OCI-LY7 (cell line): ENCODE measurements at regions of chrX and their contacts with region 1.

Region 1: GRCh38 chrX:47650164-47651042 is at the start of gene ELK1:
- DNase-seq: peak; percentile 96
- H3K4me3 ChIP-seq: peak within 1 kb of the TSS; percentile 96
- H3K27ac ChIP-seq: peak within 1 kb of the TSS; percentile 52
- H3K4me1 ChIP-seq: peaks cover 21% of the 10 kb centered on the region
- CTCF ChIP-seq: no peak
- total RNA-seq, gene ELK1: 23.0 and 23.3 TPM in 2 replicates

Region 2: GRCh38 chrX:47217642-47218279 is 432.6 kb before region 1 on chrX:
- CTCF ChIA-PET with region 1: no interaction called
- POLR2A ChIA-PET with region 1: no interaction called
- intact Hi-C with region 1: loop called (anchors 2 kb)
- DNase-seq: peak; percentile 96
- H3K4me3 ChIP-seq: peak overlapping the region; percentile 98
- H3K27ac ChIP-seq: peak overlapping the region; percentile 80
- H3K4me1 ChIP-seq: peaks cover 26% of the 10 kb centered on the region
- CTCF ChIP-seq: no peak

Region 3: GRCh38 chrX:47560831-47561652 is 89.4 kb before region 1 on chrX and contains the start of gene ARAF:
- CTCF ChIA-PET with region 1: no interaction called
- POLR2A ChIA-PET with region 1: no interaction called
- intact Hi-C with region 1: loop called (anchors 5 kb)
- DNase-seq: peak; percentile 98
- H3K4me3 ChIP-seq: peak within 1 kb of the TSS; percentile 86
- H3K27ac ChIP-seq: peak within 1 kb of the TSS; percentile 70
- H3K4me1 ChIP-seq: peaks cover 31% of the 10 kb centered on the region
- CTCF ChIP-seq: no peak
- total RNA-seq, gene ARAF: 13.2 and 28.9 TPM in 2 replicates

Region 4: GRCh38 chrX:47690175-47690574 is 39.8 kb after region 1 on chrX:
- CTCF ChIA-PET with region 1: no interaction called
- POLR2A ChIA-PET with region 1: no interaction called
- intact Hi-C with region 1: no loop called
- DNase-seq: no peak
- H3K4me3 ChIP-seq: no peak overlapping the region
- H3K27ac ChIP-seq: no peak overlapping the region
- H3K4me1 ChIP-seq: no peaks in the 10 kb centered on the region
- CTCF ChIP-seq: no peak

Region 5: GRCh38 chrX:47802589-47802988 is 152.2 kb after region 1 on chrX:
- CTCF ChIA-PET with region 1: no interaction called
- POLR2A ChIA-PET with region 1: interaction called, 10 read pairs
- intact Hi-C with region 1: no loop called
- DNase-seq: no peak
- H3K4me3 ChIP-seq: no peak overlapping the region
- H3K27ac ChIP-seq: no peak overlapping the region
- H3K4me1 ChIP-seq: peaks cover 13% of the 10 kb centered on the region
- CTCF ChIP-seq: no peak

Region 6: DNA sequence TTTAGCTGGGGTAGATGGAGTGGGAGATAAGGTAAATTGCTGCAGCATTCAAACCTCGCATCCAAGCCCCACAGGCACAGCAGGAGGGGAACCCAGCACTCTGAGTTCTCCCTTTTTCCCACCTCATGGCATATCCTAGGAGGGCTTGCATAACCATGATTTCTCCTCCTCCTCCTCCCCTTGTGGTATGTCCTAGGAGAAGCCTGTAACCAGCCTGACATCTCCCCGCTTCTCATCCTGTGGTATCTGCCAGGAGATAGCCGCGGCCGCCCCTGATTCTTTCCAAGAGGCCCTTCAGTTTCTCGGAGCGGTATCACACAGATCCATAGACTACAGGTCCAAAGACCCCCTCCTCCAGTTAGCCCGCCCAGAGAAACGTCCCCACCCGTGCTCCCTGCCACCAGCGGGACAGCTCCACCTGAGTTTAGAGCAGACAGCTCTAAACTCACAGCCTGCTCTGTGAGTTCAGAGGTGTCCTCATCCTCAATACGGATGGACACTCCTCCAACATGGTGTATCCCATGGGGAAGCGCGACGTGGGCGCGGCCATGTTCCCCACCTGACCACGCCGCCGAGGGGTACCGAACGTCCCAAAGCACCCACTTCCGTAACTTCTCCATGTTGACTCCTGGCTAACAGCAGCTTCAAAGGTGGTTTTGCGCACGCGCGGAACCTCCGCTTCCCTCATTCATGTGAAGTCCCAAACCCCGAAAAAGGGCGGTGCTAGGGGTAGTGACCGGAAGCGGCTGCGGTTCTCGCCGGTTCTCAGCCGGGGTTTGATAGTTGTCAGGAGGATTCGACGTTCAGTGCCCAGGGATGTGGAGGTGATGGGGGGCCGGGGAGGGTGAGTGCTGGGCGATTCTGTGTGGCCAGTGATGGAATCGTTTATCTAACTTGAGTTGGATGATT is 186.0 kb after region 1 on chrX and contains the start of gene ZNF81:
- CTCF ChIA-PET with region 1: no interaction called
- POLR2A ChIA-PET with region 1: no interaction called
- intact Hi-C with region 1: loop called (anchors 10 kb)
- DNase-seq: peak; percentile 95
- H3K4me3 ChIP-seq: peak within 1 kb of the TSS; percentile 90
- H3K27ac ChIP-seq: peak within 1 kb of the TSS; percentile 38
- H3K4me1 ChIP-seq: peaks cover 17% of the 10 kb centered on the region
- CTCF ChIP-seq: no peak
- total RNA-seq, gene ZNF81: 4.9 and 7.1 TPM in 2 replicates

Region 7: GRCh38 chrX:47936224-47936939 is 286.0 kb after region 1 on chrX:
- CTCF ChIA-PET with region 1: no interaction called
- POLR2A ChIA-PET with region 1: no interaction called
- intact Hi-C with region 1: loop called (anchors 10 kb)
- DNase-seq: peak; percentile 85
- H3K4me3 ChIP-seq: peak overlapping the region; percentile 64
- H3K27ac ChIP-seq: peak overlapping the region; percentile 98
- H3K4me1 ChIP-seq: peaks cover 31% of the 10 kb centered on the region
- CTCF ChIP-seq: 0 out of 2 replicates have a peak, but pooled peaks have one; percentile 18